ENCODE measurements at regions of chr3 and their contacts with region 1.

Region 1: DNA sequence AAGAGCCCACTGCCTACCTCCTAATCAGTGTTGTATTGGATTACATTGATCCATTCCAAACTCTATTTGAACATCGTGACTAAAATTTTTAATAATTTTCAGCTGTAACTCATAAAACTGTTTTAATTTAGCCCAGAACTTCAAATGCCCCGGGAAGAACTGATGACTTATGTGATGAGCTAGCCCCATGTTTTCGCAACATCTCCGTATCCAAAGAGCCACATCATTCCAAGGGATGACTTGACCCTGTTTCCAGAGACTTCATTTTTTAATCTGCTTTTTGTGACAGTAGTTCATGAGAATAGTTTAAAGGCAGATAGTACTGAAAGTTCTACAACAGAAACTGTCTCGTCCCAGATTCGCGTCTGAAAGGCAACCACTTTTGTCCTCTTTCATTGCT is 97.4 kb downstream of the STAC start:
- DNase-seq: no peak
- ATAC-seq: peak in 1 of 2 donors; percentile 33
- H3K4me3 ChIP-seq: no peak overlapping the region
- H3K27ac ChIP-seq: no peak overlapping the region
- H3K4me1 ChIP-seq: no peaks in the 10 kb centered on the region
- H3K27me3 ChIP-seq: no peaks in the 10 kb centered on the region
- CTCF ChIP-seq: no peak
- POLR2A ChIP-seq: no peak

Region 2: DNA sequence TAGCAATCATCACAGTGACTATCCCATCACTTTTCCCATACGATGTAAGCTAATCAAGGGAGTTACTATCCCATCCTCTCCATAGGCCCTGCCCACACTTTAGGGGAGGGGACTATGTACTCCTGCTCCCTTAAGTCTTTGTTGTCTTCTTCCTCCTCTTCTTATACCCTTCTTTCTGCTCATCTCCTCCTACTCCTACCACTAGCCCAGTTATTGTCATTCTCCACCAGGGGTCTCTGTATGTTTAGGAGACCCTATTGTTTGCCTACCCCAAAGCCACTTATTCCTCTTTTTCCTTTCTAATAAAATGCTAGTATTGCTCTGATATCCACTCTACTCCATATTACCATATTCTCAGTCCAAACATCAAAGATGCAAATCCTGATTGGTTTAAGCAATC is 69.5 kb before region 1 on chr3:
- in situ Hi-C with region 1: no loop called
- intact Hi-C with region 1: loop called (anchors 10 kb)
- DNase-seq: no peak
- ATAC-seq: no peak
- H3K4me3 ChIP-seq: no peak overlapping the region
- H3K27ac ChIP-seq: no peak overlapping the region
- H3K4me1 ChIP-seq: no peaks in the 10 kb centered on the region
- H3K27me3 ChIP-seq: no peaks in the 10 kb centered on the region
- CTCF ChIP-seq: no peak
- POLR2A ChIP-seq: no peak